ENCODE measurements at regions of chr6 and their contacts with region 1.

Region 1: DNA sequence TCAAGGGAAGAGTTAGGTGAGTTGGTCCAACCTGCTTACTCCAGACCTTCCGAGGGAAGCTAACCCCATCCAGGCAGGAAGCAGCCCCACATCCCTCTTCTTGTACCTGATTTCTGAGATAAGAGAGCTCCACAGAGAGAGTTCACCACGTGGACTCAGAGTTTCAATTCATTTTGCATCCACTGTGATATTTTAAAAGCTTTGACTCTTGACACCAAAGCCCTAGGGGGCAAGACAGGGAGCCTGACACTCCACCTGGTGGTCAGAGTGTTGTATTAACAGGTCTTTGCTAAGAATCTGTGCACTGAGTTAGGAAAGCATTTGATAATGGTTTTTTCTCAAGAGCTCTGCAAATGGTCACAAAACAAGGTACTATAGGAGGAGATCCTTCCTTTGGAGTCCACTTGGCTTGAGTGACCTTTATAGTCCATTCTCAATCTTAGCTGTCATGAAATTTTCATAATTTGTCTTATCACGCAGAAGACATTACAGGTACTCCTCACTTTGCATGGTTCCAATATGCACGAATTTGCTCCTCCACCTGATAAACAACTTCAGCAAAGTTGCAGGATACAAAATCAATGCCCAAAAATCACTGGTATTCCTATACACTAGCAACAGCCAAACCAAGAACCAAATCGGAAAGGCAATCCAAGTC is 56.2 kb upstream of the RIPOR2 start:
- DNase-seq: peak; percentile 48 to 90 (median 75)
- ATAC-seq: peak; percentile 92
- H3K4me3 ChIP-seq: peak overlapping the region; percentile 5 to 15
- H3K4me3 Mint-ChIP-seq: peak overlapping the region; percentile 68
- H3K27ac ChIP-seq: peak overlapping the region; percentile 14 to 55
- H3K27ac Mint-ChIP-seq: peak overlapping the region; percentile 93
- H3K4me1 ChIP-seq: peaks cover 40% of the 10 kb centered on the region
- H3K4me1 Mint-ChIP-seq: peaks cover 74% of the 10 kb centered on the region
- H3K27me3 ChIP-seq: no peaks in the 10 kb centered on the region
- H3K27me3 Mint-ChIP-seq: no peaks in the 10 kb centered on the region
- CTCF ChIP-seq: peak; percentile 83

Region 2: GRCh38 chr6:24861934-24862333 is 130.0 kb before region 1 on chr6:
- CTCF ChIA-PET with region 1: interaction called, 83 read pairs
- POLR2A ChIA-PET with region 1: interaction called, 28 read pairs
- intact Hi-C with region 1: no loop called
- DNase-seq: no peak
- ATAC-seq: no peak
- H3K4me3 ChIP-seq: peak overlapping the region in 1 of 2 experiments; percentile 2
- H3K4me3 Mint-ChIP-seq: no peak overlapping the region
- H3K27ac ChIP-seq: peak overlapping the region; percentile 11 to 75
- H3K27ac Mint-ChIP-seq: peak overlapping the region; percentile 96
- H3K4me1 ChIP-seq: peaks cover 96% of the 10 kb centered on the region
- H3K4me1 Mint-ChIP-seq: peaks cover 95% of the 10 kb centered on the region
- H3K27me3 ChIP-seq: no peaks in the 10 kb centered on the region
- H3K27me3 Mint-ChIP-seq: no peaks in the 10 kb centered on the region
- CTCF ChIP-seq: no peak

Region 3: DNA sequence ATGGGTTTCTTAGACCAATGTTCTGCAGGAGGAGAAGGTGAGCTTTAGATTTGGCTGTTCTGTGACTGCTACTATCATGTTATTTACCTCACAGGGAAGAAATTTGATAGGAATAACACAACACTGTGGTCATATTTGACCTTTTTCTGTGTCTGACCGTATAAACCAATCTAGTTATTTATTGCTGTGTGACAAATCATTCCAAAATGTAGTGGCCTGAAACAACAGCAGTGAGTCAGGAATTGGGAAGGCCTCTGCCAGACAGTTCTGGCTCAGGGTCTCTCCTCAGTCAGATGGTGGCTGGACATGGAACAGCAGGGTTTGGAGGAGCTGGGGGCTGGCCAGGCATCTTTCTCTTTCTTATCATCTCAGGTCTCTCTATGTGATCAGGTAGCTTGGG is 89.2 kb before region 1 on chr6:
- CTCF ChIA-PET with region 1: interaction called, 176 read pairs
- POLR2A ChIA-PET with region 1: interaction called, 10 read pairs
- intact Hi-C with region 1: no loop called
- DNase-seq: no peak
- ATAC-seq: no peak
- H3K4me3 ChIP-seq: no peak overlapping the region
- H3K4me3 Mint-ChIP-seq: peak overlapping the region; percentile 44
- H3K27ac ChIP-seq: peak overlapping the region; percentile 12 to 63
- H3K27ac Mint-ChIP-seq: peak overlapping the region; percentile 94
- H3K4me1 ChIP-seq: peaks cover 97% of the 10 kb centered on the region
- H3K4me1 Mint-ChIP-seq: peaks cover 94% of the 10 kb centered on the region
- H3K27me3 ChIP-seq: no peaks in the 10 kb centered on the region
- H3K27me3 Mint-ChIP-seq: no peaks in the 10 kb centered on the region
- CTCF ChIP-seq: no peak

Region 4: GRCh38 chr6:24933868-24934401 is 58.0 kb before region 1 on chr6:
- CTCF ChIA-PET with region 1: interaction called, 320 read pairs
- POLR2A ChIA-PET with region 1: interaction called, 136 read pairs
- intact Hi-C with region 1: loop called (anchors 1 kb)
- DNase-seq: peak in 7 of 9 experiments; percentile 40 to 82 (median 59)
- ATAC-seq: no peak
- H3K4me3 ChIP-seq: peak overlapping the region; percentile 68 to 89
- H3K4me3 Mint-ChIP-seq: peak overlapping the region; percentile 97
- H3K27ac ChIP-seq: peak overlapping the region; percentile 73 to 80
- H3K27ac Mint-ChIP-seq: peak overlapping the region; percentile 95
- H3K4me1 ChIP-seq: peaks cover 49% of the 10 kb centered on the region
- H3K4me1 Mint-ChIP-seq: peaks cover 62% of the 10 kb centered on the region
- H3K27me3 ChIP-seq: no peaks in the 10 kb centered on the region
- H3K27me3 Mint-ChIP-seq: no peaks in the 10 kb centered on the region
- CTCF ChIP-seq: peak; percentile 96

Region 5: GRCh38 chr6:24968786-24969185 is 23.2 kb before region 1 on chr6:
- CTCF ChIA-PET with region 1: interaction called, 35 read pairs
- POLR2A ChIA-PET with region 1: interaction called, 3 read pairs
- intact Hi-C with region 1: no loop called
- DNase-seq: peak in 2 of 9 experiments; percentile 30 to 52
- ATAC-seq: peak; percentile 70
- H3K4me3 ChIP-seq: no peak overlapping the region
- H3K4me3 Mint-ChIP-seq: no peak overlapping the region
- H3K27ac ChIP-seq: peak overlapping the region in 1 of 2 experiments; percentile 62
- H3K27ac Mint-ChIP-seq: peak overlapping the region; percentile 41
- H3K4me1 ChIP-seq: peaks cover 50% of the 10 kb centered on the region
- H3K4me1 Mint-ChIP-seq: peaks cover 84% of the 10 kb centered on the region
- H3K27me3 ChIP-seq: no peaks in the 10 kb centered on the region
- H3K27me3 Mint-ChIP-seq: no peaks in the 10 kb centered on the region
- CTCF ChIP-seq: no peak

Region 6: GRCh38 chr6:25070547-25071366 is 78.8 kb after region 1 on chr6:
- CTCF ChIA-PET with region 1: interaction called, 15 read pairs
- POLR2A ChIA-PET with region 1: no interaction called
- intact Hi-C with region 1: loop called in 1 of 2 experiments (anchors 1 kb)
- DNase-seq: peak; percentile 62 to 92 (median 81)
- ATAC-seq: peak; percentile 98
- H3K4me3 ChIP-seq: peak overlapping the region in 1 of 2 experiments; percentile 12
- H3K4me3 Mint-ChIP-seq: peak overlapping the region; percentile 73
- H3K27ac ChIP-seq: peak overlapping the region in 1 of 2 experiments; percentile 31
- H3K27ac Mint-ChIP-seq: peak overlapping the region; percentile 87
- H3K4me1 ChIP-seq: no peaks in the 10 kb centered on the region
- H3K4me1 Mint-ChIP-seq: peaks cover 9% of the 10 kb centered on the region
- H3K27me3 ChIP-seq: no peaks in the 10 kb centered on the region
- H3K27me3 Mint-ChIP-seq: no peaks in the 10 kb centered on the region
- CTCF ChIP-seq: peak; percentile 92

Measured in CD8-positive, alpha-beta T cell (primary cell).